Caco-2 (cell line): ENCODE measurements at regions of chr4 and their contacts with region 1.

Region 1: DNA sequence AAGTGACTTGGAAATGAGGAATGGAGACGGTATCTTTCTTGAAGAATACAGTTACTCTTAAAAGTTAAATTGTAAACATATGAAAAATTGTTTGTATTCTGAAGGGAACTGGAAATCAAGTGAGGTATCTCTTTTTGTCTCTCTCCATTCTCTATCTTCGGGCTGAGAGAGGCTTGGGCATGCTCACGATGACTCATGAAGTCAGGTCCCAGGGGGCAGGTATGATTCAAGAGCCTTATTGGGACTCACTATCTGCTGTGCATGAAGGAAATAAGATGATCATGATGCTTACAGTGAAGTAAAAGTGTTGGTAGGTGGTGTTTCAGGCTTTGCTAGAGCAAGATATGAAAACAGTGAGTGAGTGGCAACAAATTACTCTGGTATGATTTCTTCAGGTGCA is 200.4 kb upstream of the PITX2 start:
- DNase-seq: no peak
- H3K4me3 ChIP-seq: no peak overlapping the region
- H3K4me3 Mint-ChIP-seq: no peak overlapping the region
- H3K27ac Mint-ChIP-seq: no peak overlapping the region
- H3K4me1 ChIP-seq: peaks cover 43% of the 10 kb centered on the region
- H3K4me1 Mint-ChIP-seq: peaks cover 7% of the 10 kb centered on the region
- H3K27me3 ChIP-seq: no peaks in the 10 kb centered on the region
- H3K27me3 Mint-ChIP-seq: no peaks in the 10 kb centered on the region
- CTCF ChIP-seq: no peak

Region 2: GRCh38 chr4:110622841-110623717 is 200.2 kb before region 1 on chr4 and contains the start of gene PITX2:
- CTCF ChIA-PET with region 1: no interaction called
- POLR2A ChIA-PET with region 1: interaction called, 4 read pairs
- intact Hi-C with region 1: loop called (anchors 1 kb)
- DNase-seq: peak; percentile 99
- H3K4me3 ChIP-seq: peak within 1 kb of the TSS; percentile 58
- H3K4me3 Mint-ChIP-seq: peak within 1 kb of the TSS; percentile 92
- H3K27ac Mint-ChIP-seq: peak within 1 kb of the TSS; percentile 86
- H3K4me1 ChIP-seq: peaks cover 44% of the 10 kb centered on the region
- H3K4me1 Mint-ChIP-seq: peaks cover 47% of the 10 kb centered on the region
- H3K27me3 ChIP-seq: no peaks in the 10 kb centered on the region
- H3K27me3 Mint-ChIP-seq: no peaks in the 10 kb centered on the region
- CTCF ChIP-seq: no peak
- total RNA-seq, gene PITX2: 76.8 and 82.8 TPM in 2 replicates

Region 3: GRCh38 chr4:110636680-110637407 is 186.4 kb before region 1 on chr4:
- CTCF ChIA-PET with region 1: no interaction called
- POLR2A ChIA-PET with region 1: interaction called, 3 read pairs
- intact Hi-C with region 1: loop called (anchors 1 kb)
- DNase-seq: peak; percentile 86
- H3K4me3 ChIP-seq: peak overlapping the region; percentile 73
- H3K4me3 Mint-ChIP-seq: peak overlapping the region; percentile 88
- H3K27ac Mint-ChIP-seq: peak overlapping the region; percentile 93
- H3K4me1 ChIP-seq: 0 out of 2 replicates have a peak, but pooled peaks cover 8% of the 10 kb centered on the region
- H3K4me1 Mint-ChIP-seq: peaks cover 20% of the 10 kb centered on the region
- H3K27me3 ChIP-seq: no peaks in the 10 kb centered on the region
- H3K27me3 Mint-ChIP-seq: no peaks in the 10 kb centered on the region
- CTCF ChIP-seq: no peak

Region 4: DNA sequence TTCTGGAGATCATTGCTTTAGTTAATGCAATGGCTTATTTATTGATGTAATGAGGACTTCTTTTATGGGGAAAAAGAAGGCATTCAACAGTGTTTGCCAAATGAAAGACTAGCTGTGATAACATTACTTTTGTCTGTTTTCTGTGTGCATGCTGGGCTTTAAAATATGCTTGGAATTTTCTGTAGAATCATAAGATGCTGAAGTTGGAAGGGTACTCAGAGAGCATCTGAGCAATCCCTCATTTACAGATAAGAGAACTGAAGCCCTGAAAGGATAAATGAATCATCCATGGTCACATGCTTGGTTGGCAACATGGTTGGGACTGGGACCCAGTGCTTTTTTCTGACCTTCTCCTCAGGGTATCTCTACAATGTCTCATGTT is 169.0 kb before region 1 on chr4:
- CTCF ChIA-PET with region 1: no interaction called
- POLR2A ChIA-PET with region 1: no interaction called
- intact Hi-C with region 1: loop called (anchors 2 kb)
- DNase-seq: peak in 1 of 2 experiments; percentile 27
- H3K4me3 ChIP-seq: no peak overlapping the region
- H3K4me3 Mint-ChIP-seq: peak overlapping the region; percentile 44
- H3K27ac Mint-ChIP-seq: peak overlapping the region; percentile 83
- H3K4me1 ChIP-seq: peaks cover 33% of the 10 kb centered on the region
- H3K4me1 Mint-ChIP-seq: peaks cover 26% of the 10 kb centered on the region
- H3K27me3 ChIP-seq: no peaks in the 10 kb centered on the region
- H3K27me3 Mint-ChIP-seq: no peaks in the 10 kb centered on the region
- CTCF ChIP-seq: no peak

Region 5: GRCh38 chr4:110854021-110854678 is 30.9 kb after region 1 on chr4:
- CTCF ChIA-PET with region 1: no interaction called
- POLR2A ChIA-PET with region 1: no interaction called
- intact Hi-C with region 1: loop called (anchors 1 kb)
- DNase-seq: peak in 1 of 2 experiments; percentile 32
- H3K4me3 ChIP-seq: no peak overlapping the region
- H3K4me3 Mint-ChIP-seq: peak overlapping the region; percentile 28
- H3K27ac Mint-ChIP-seq: no peak overlapping the region
- H3K4me1 ChIP-seq: peaks cover 30% of the 10 kb centered on the region
- H3K4me1 Mint-ChIP-seq: peaks cover 18% of the 10 kb centered on the region
- H3K27me3 ChIP-seq: no peaks in the 10 kb centered on the region
- H3K27me3 Mint-ChIP-seq: no peaks in the 10 kb centered on the region
- CTCF ChIP-seq: no peak

Region 6: GRCh38 chr4:110926841-110927400 is 103.7 kb after region 1 on chr4:
- CTCF ChIA-PET with region 1: interaction called, 7 read pairs
- POLR2A ChIA-PET with region 1: no interaction called
- intact Hi-C with region 1: loop called (anchors 1 kb)
- DNase-seq: peak; percentile 75 to 79
- H3K4me3 ChIP-seq: no peak overlapping the region
- H3K4me3 Mint-ChIP-seq: peak overlapping the region; percentile 39
- H3K27ac Mint-ChIP-seq: peak overlapping the region; percentile 23
- H3K4me1 ChIP-seq: peaks cover 42% of the 10 kb centered on the region
- H3K4me1 Mint-ChIP-seq: peaks cover 31% of the 10 kb centered on the region
- H3K27me3 ChIP-seq: no peaks in the 10 kb centered on the region
- H3K27me3 Mint-ChIP-seq: no peaks in the 10 kb centered on the region
- CTCF ChIP-seq: no peak